ENCODE measurements at regions of chr1 and their contacts with region 1.

Region 1: DNA sequence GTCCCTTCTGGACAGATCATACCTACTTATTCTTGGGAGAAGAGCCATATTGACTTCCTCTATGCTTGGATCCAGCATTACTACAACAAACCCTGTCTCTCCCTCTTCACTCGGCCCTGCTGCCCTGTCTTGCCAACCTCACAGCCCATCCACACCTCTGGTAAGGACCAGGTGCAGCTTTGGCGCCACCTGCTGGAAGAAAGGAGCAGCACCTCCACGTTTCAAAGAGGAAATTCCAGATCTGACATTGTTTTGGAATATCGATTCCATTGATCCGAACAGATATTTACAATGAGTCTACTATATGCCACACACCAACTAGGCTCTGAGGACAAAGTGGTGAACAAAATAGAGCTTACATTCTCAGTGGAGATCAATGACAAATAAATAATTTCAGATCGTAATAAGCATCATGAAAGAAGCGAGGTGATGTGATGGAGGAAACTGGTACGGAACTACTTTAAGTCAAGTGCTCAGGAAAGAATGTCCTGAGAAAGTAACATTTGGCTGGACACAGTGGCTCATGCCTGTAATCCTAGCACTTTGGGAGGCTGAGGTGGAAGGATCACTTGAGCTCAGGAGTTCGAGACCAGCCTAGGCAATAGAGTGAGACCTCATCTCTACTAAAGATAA is 18.7 kb downstream of the MFSD2A start:
- DNase-seq: peak; percentile 76
- H3K4me3 ChIP-seq: no peak overlapping the region
- H3K27ac ChIP-seq: no peak overlapping the region
- H3K4me1 ChIP-seq: no peaks in the 10 kb centered on the region
- H3K27me3 ChIP-seq: no peaks in the 10 kb centered on the region
- CTCF ChIP-seq: peak; percentile 80 to 98 (median 96)
- POLR2A ChIP-seq: no peak

Region 2: DNA sequence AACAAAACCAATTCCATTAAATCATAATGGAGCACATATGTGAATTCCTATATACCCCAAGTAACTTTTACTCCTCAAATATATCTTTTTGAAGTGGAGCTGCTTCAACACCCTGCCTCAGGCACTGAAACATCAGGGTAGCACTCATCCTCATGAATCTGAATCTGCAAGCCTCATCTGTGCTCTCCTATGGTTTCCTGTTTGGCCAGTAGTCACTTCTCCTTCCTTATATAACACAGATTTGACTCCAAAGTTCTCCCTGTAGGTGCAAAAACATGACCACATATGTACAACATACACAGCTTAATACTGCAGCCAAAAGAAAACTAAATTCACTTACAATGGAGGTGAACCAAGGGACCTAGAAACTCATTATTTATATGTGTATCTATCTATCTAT is 97.5 kb before region 1 on chr1:
- intact Hi-C with region 1: no loop called
- DNase-seq: no peak
- H3K4me3 ChIP-seq: no peak overlapping the region
- H3K27ac ChIP-seq: peak overlapping the region in 1 of 2 donors; percentile 18
- H3K4me1 ChIP-seq: peaks cover 9% of the 10 kb centered on the region
- H3K27me3 ChIP-seq: no peaks in the 10 kb centered on the region
- CTCF ChIP-seq: no peak
- POLR2A ChIP-seq: no peak

Region 3: GRCh38 chr1:39919545-39919944 is 54.1 kb before region 1 on chr1:
- intact Hi-C with region 1: loop called (anchors 1 kb)
- DNase-seq: peak; percentile 58
- H3K4me3 ChIP-seq: no peak overlapping the region
- H3K27ac ChIP-seq: no peak overlapping the region
- H3K4me1 ChIP-seq: no peaks in the 10 kb centered on the region
- H3K27me3 ChIP-seq: no peaks in the 10 kb centered on the region
- CTCF ChIP-seq: peak; percentile 21 to 81 (median 68)
- POLR2A ChIP-seq: no peak

Region 4: GRCh38 chr1:40107290-40108262 is 134.0 kb after region 1 on chr1:
- intact Hi-C with region 1: no loop called
- DNase-seq: peak; percentile 79
- H3K4me3 ChIP-seq: no peak overlapping the region
- H3K27ac ChIP-seq: no peak overlapping the region
- H3K4me1 ChIP-seq: no peaks in the 10 kb centered on the region
- H3K27me3 ChIP-seq: no peaks in the 10 kb centered on the region
- CTCF ChIP-seq: no peak
- POLR2A ChIP-seq: no peak